Left cardiac atrium (tissue), 4 donors: ENCODE measurements at regions of chr11 and their contacts with region 1.

Region 1: GRCh38 chr11:16809886-16810668 is 71.6 kb downstream of the C11orf58 start:
- DNase-seq: peak; percentile 75
- ATAC-seq: peak; percentile 81 to 82

Region 2: GRCh38 chr11:16935518-16936302 is 125.6 kb after region 1 on chr11:
- intact Hi-C with region 1: loop called in 1 of 2 experiments (anchors 10 kb)
- DNase-seq: peak; percentile 26
- ATAC-seq: peak; percentile 31 to 34